Activated CD4-positive, alpha-beta memory T cell treated with anti-CD3 and anti-CD28 coated beads for 36 hours (primary cell): ENCODE measurements at regions of chr3 and their contacts with region 1.

Region 1: GRCh38 chr3:71064288-71064955 is 519.1 kb downstream of the FOXP1 start:
- DNase-seq: peak; percentile 78
- H3K4me3 Mint-ChIP-seq: no peak overlapping the region
- H3K27ac Mint-ChIP-seq: no peak overlapping the region
- H3K4me1 Mint-ChIP-seq: peaks cover 63% of the 10 kb centered on the region
- H3K27me3 Mint-ChIP-seq: no peaks in the 10 kb centered on the region

Region 2: DNA sequence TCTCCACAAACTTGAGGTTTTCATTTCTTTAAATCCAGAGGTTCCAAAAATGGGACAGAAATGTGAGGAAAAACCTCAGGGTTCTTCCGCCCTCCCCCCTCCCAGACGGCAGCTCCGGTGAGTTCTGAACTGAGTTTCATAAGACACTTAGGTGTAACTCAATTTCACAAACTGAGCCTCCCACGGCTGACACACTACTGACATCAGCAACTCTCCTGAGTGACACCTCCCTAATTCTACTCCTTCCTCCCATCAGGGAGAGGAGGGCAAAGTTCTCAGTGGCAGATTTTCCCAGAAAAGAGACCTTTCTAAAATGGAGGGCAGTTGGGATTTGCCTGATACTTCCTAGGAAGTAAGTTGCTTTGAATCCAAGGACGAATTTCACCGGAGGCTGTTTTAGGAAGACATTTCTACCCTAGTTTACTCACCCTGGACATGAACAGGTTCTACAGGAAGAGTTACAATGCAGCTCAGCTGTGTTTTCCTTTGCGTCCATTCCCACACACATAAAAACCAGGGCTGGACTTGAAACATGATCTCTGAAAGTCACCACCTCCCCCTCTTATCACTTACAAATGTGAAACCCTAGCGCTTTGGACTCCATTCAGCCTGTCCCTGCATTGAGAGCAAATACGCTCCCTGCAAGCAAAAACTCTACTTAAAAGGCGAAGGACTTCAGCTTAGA is 1863.9 kb before region 1 on chr3:
- CTCF ChIA-PET with region 1: no interaction called
- POLR2A ChIA-PET with region 1: no interaction called
- intact Hi-C with region 1: loop called (anchors 10 kb)
- DNase-seq: peak; percentile 82
- H3K4me3 Mint-ChIP-seq: peak overlapping the region; percentile 92
- H3K27ac Mint-ChIP-seq: peak overlapping the region; percentile 98
- H3K4me1 Mint-ChIP-seq: peaks cover 74% of the 10 kb centered on the region
- H3K27me3 Mint-ChIP-seq: no peaks in the 10 kb centered on the region

Region 3: GRCh38 chr3:70982700-70983140 is 81.7 kb before region 1 on chr3:
- CTCF ChIA-PET with region 1: no interaction called
- POLR2A ChIA-PET with region 1: interaction called, 6 read pairs
- intact Hi-C with region 1: loop called (anchors 2 kb)
- DNase-seq: peak; percentile 70
- H3K4me3 Mint-ChIP-seq: peak overlapping the region; percentile 57
- H3K27ac Mint-ChIP-seq: peak overlapping the region; percentile 99
- H3K4me1 Mint-ChIP-seq: peaks cover 64% of the 10 kb centered on the region
- H3K27me3 Mint-ChIP-seq: no peaks in the 10 kb centered on the region

Region 4: DNA sequence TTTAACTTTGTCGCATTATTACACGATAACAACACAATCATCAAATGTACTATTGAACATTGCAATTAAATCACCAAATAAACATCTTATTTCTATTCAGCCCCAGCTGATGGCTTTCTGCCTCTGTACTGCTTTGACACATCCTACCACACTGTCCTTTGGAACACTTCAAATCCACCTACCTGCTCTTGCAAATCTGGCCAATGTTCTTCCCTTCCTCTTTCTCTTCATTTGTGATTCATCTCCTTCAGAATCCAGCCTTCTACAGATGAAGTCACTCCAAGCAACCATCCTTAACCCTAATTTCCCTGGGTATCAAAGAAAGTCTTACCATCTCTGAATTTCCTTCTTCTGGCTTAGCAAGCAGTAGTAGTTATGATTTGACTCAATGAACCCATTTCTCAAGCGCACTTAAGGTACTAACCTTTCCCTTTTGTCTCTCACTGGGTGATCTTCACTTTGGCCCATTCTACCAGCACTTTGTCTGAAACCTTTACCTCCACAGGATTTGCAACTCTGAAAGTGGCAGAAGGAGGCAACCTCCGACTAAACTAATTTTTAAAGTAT is 16.2 kb after region 1 on chr3:
- CTCF ChIA-PET with region 1: interaction called, 4 read pairs
- POLR2A ChIA-PET with region 1: interaction called, 13 read pairs
- intact Hi-C with region 1: loop called (anchors 1 kb)
- DNase-seq: no peak
- H3K4me3 Mint-ChIP-seq: peak overlapping the region; percentile 25
- H3K27ac Mint-ChIP-seq: peak overlapping the region; percentile 74
- H3K4me1 Mint-ChIP-seq: peaks cover 92% of the 10 kb centered on the region
- H3K27me3 Mint-ChIP-seq: no peaks in the 10 kb centered on the region

Region 5: GRCh38 chr3:71130471-71131374 is 66.3 kb after region 1 on chr3:
- CTCF ChIA-PET with region 1: interaction called, 5 read pairs
- POLR2A ChIA-PET with region 1: interaction called, 29 read pairs
- intact Hi-C with region 1: loop called (anchors 1 kb)
- DNase-seq: peak; percentile 81
- H3K4me3 Mint-ChIP-seq: peak overlapping the region; percentile 93
- H3K27ac Mint-ChIP-seq: peak overlapping the region; percentile 94
- H3K4me1 Mint-ChIP-seq: peaks cover 68% of the 10 kb centered on the region
- H3K27me3 Mint-ChIP-seq: no peaks in the 10 kb centered on the region

Region 6: DNA sequence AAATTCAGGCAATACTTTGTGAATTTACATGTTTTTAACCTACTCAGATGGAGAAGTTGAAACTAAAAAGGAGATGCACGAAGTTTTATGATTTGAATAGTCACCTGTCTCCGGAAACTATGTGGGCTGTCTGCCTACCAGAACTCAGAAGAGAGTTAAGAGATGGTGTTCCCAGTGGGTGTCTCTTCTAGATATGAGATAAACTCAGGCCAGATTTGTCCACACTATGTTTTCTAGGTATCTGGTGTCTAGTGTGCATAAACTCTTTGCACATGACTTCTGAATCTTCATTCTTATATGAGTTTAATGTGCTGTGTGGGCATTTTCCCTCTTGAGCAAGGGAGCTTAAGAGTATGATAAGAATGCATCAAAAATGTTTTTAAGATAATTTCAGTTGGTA is 296.3 kb after region 1 on chr3:
- CTCF ChIA-PET with region 1: no interaction called
- POLR2A ChIA-PET with region 1: interaction called, 27 read pairs
- intact Hi-C with region 1: loop called (anchors 1 kb)
- DNase-seq: peak; percentile 52
- H3K4me3 Mint-ChIP-seq: peak overlapping the region; percentile 39
- H3K27ac Mint-ChIP-seq: peak overlapping the region; percentile 89
- H3K4me1 Mint-ChIP-seq: peaks cover 76% of the 10 kb centered on the region
- H3K27me3 Mint-ChIP-seq: no peaks in the 10 kb centered on the region

Region 7: GRCh38 chr3:71512000-71512399 is 447.6 kb after region 1 on chr3:
- CTCF ChIA-PET with region 1: interaction called, 4 read pairs
- POLR2A ChIA-PET with region 1: no interaction called
- intact Hi-C with region 1: loop called (anchors 5 kb)
- DNase-seq: peak; percentile 46
- H3K4me3 Mint-ChIP-seq: no peak overlapping the region
- H3K27ac Mint-ChIP-seq: no peak overlapping the region
- H3K4me1 Mint-ChIP-seq: peaks cover 6% of the 10 kb centered on the region
- H3K27me3 Mint-ChIP-seq: no peaks in the 10 kb centered on the region